A673 (cell line): ENCODE measurements at regions of chr12 and their contacts with region 1.

Region 1: GRCh38 chr12:69821456-69822159 is 3.4 kb upstream of the MYRFL start:
- DNase-seq: peak; percentile 97
- H3K4me3 ChIP-seq: peak overlapping the region; percentile 32
- H3K27ac ChIP-seq: peak overlapping the region; percentile 81
- H3K4me1 ChIP-seq: peaks cover 32% of the 10 kb centered on the region
- H3K27me3 ChIP-seq: no peaks in the 10 kb centered on the region
- CTCF ChIP-seq: no peak

Region 2: GRCh38 chr12:69739287-69740191 is 82.1 kb before region 1 on chr12:
- CTCF ChIA-PET with region 1: no interaction called
- POLR2A ChIA-PET with region 1: no interaction called
- intact Hi-C with region 1: loop called (anchors 5 kb)
- DNase-seq: peak; percentile 85
- H3K4me3 ChIP-seq: peak overlapping the region; percentile 91
- H3K27ac ChIP-seq: peak overlapping the region; percentile 71
- H3K4me1 ChIP-seq: peaks cover 11% of the 10 kb centered on the region
- H3K27me3 ChIP-seq: no peaks in the 10 kb centered on the region
- CTCF ChIP-seq: no peak

Region 3: GRCh38 chr12:69985656-69986055 is 164.0 kb after region 1 on chr12:
- CTCF ChIA-PET with region 1: no interaction called
- POLR2A ChIA-PET with region 1: no interaction called
- intact Hi-C with region 1: loop called (anchors 5 kb)
- DNase-seq: peak; percentile 42
- H3K4me3 ChIP-seq: no peak overlapping the region
- H3K27ac ChIP-seq: no peak overlapping the region
- H3K4me1 ChIP-seq: peaks cover 26% of the 10 kb centered on the region
- H3K27me3 ChIP-seq: no peaks in the 10 kb centered on the region
- CTCF ChIP-seq: peak; percentile 64